Mammary epithelial cell (primary cell): ENCODE measurements at regions of chr7 and their contacts with region 1.

Region 1: GRCh38 chr7:126574276-126575250 is 678.2 kb downstream of the GRM8 start:
- DNase-seq: peak; percentile 89
- H3K4me3 ChIP-seq: peak overlapping the region; percentile 12 to 54 (median 39)
- H3K27ac ChIP-seq: peak overlapping the region; percentile 97
- H3K4me1 ChIP-seq: peaks cover 19% of the 10 kb centered on the region
- H3K27me3 ChIP-seq: no peaks in the 10 kb centered on the region
- CTCF ChIP-seq: no peak

Region 2: DNA sequence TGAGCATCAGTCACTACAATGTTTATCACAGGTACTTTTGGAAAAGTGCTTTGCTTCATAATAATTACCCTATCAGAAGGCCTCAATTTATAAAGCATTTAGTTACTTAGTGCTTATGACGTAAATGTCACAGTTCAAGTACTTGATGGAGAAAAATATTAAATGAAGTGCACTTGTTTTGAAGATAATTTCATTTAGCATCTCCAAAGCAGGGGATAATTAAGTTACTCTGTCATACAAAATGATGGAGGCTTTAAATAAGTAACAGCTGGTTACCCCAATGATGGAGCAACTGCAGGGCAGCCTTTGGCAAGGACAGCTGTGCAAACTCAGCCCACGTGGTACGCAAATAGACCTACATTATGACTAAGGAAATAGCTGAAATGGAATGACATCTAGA is 90.6 kb before region 1 on chr7:
- CTCF ChIA-PET with region 1: no interaction called
- dilution Hi-C with region 1: no loop called
- in situ Hi-C with region 1: no loop called
- intact Hi-C with region 1: no loop called
- DNase-seq: no peak
- H3K4me3 ChIP-seq: no peak overlapping the region
- H3K27ac ChIP-seq: no peak overlapping the region
- H3K4me1 ChIP-seq: no peaks in the 10 kb centered on the region
- H3K27me3 ChIP-seq: no peaks in the 10 kb centered on the region
- CTCF ChIP-seq: no peak

Region 3: DNA sequence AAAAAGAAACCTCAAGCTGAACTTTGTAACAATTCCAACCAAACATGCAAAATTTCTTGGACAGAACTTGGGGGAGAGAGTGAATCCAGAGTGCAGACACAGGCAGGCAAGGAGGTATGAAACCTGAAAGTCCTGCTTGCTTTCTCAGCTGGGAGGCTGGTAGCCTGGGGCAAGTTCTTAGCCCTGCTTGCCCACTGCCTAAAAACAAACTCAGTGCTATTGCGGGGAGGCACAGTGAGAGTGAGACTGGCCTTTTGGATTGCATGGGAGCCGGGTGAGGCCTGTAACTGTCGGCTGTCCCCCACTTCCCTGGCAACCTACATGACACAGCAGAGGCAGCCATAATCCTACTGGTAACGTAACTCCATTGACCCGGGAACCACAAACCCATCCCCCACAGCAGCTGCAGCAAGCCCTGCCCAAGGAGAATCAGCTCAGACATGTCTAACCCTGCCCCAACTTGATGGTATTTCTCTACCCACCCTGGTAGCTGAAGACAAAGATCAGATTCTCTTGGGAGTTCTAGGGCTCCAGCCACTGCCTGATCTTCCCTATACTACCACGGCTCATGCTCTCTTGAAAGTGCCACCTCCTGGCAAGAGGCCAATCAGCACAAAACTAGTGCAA is 14.6 kb after region 1 on chr7:
- CTCF ChIA-PET with region 1: no interaction called
- dilution Hi-C with region 1: no loop called
- in situ Hi-C with region 1: no loop called
- intact Hi-C with region 1: loop called (anchors 2 kb)
- DNase-seq: peak; percentile 93
- H3K4me3 ChIP-seq: no peak overlapping the region
- H3K27ac ChIP-seq: peak overlapping the region; percentile 62
- H3K4me1 ChIP-seq: peaks cover 16% of the 10 kb centered on the region
- H3K27me3 ChIP-seq: no peaks in the 10 kb centered on the region
- CTCF ChIP-seq: no peak

Region 4: GRCh38 chr7:126700807-126701604 is 126.4 kb after region 1 on chr7:
- CTCF ChIA-PET with region 1: no interaction called
- dilution Hi-C with region 1: no loop called
- in situ Hi-C with region 1: no loop called
- intact Hi-C with region 1: loop called (anchors 5 kb)
- DNase-seq: peak; percentile 93
- H3K4me3 ChIP-seq: peak overlapping the region in 1 of 3 experiments; percentile 31
- H3K27ac ChIP-seq: peak overlapping the region; percentile 85
- H3K4me1 ChIP-seq: peaks cover 36% of the 10 kb centered on the region
- H3K27me3 ChIP-seq: no peaks in the 10 kb centered on the region
- CTCF ChIP-seq: no peak